MCF 10A (cell line): ENCODE measurements at regions of chr4 and their contacts with region 1.

Region 1: DNA sequence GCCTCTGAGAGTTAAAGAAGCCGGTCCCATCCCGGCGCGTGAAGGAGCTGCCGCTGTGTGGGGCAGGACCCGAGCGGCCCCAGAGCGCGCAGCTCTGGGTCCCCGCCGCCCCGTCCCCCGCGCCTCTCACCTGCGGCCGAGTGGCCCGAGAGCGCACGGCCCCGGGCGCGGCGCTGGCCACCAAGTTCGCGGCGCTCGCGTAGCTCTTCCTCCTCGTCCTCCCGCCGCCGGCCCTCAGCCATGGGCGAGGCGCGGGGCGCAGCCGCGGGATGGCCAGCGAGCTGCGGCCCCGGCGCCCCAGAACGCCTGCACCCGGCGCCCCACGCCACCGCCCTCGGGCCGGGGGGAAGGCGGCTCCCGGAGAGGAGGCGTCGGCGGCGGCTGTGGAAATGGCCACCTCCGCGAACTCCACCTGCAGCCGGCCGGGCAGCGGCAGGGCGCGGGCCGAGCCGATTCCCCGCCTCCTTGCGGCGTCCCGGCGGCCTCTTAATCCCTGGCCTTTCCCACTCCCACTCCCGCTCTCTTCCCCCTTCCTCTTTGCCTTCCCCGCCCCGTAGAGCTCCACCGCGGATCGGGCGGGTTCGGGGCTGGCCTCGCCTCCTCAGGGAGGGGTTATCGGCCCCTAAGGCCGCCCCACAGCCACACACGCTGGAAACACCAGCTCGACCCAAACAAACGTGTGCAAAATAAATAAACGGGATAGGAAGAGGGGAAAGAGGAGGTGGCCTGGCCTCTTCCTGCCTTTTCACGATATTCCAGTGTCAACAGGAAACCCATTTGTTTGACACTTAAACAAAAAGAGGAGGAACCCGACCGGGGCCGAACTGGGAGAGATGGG is at the start of gene SH3D19:
- DNase-seq: peak; percentile 85
- H3K4me3 Mint-ChIP-seq: peak within 1 kb of the TSS; percentile 97
- H3K27ac Mint-ChIP-seq: peak within 1 kb of the TSS; percentile 80
- H3K4me1 Mint-ChIP-seq: peaks cover 49% of the 10 kb centered on the region
- H3K27me3 Mint-ChIP-seq: no peaks in the 10 kb centered on the region
- CTCF ChIP-seq: no peak
- total RNA-seq, gene SH3D19: 42.8 and 51.3 TPM in 2 replicates

Region 2: GRCh38 chr4:151099229-151099975 is 225.9 kb before region 1 on chr4 and contains the start of gene RPS3A:
- CTCF ChIA-PET with region 1: no interaction called
- POLR2A ChIA-PET with region 1: interaction called, 16 read pairs
- intact Hi-C with region 1: no loop called
- DNase-seq: peak; percentile 98
- H3K4me3 Mint-ChIP-seq: peak within 1 kb of the TSS; percentile 91
- H3K27ac Mint-ChIP-seq: peak within 1 kb of the TSS; percentile 100
- H3K4me1 Mint-ChIP-seq: peaks cover 10% of the 10 kb centered on the region
- H3K27me3 Mint-ChIP-seq: no peaks in the 10 kb centered on the region
- CTCF ChIP-seq: peak; percentile 78
- total RNA-seq, gene RPS3A: 2,661 and 2,955 TPM in 2 replicates

Region 3: DNA sequence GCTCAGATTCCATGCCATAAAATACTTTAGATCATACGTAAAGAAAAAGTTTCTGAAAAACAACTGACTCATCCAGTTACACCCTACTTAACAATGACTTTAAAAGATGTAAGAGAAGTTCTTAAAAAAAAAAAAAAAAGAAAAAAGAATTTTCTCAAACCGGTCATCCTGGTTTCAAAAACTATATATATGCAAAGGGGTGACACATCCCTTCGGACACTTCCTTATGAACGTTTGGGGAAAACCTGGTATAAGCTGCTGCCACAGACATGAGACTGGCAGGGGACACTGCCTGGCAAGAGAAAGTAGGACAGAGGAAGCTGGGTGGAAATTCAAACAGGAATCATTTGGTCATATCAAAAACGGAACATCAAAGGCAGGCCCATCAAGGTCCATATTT is 129.5 kb before region 1 on chr4:
- CTCF ChIA-PET with region 1: no interaction called
- POLR2A ChIA-PET with region 1: interaction called, 10 read pairs
- intact Hi-C with region 1: no loop called
- DNase-seq: peak; percentile 44
- H3K4me3 Mint-ChIP-seq: peak overlapping the region; percentile 35
- H3K27ac Mint-ChIP-seq: peak overlapping the region; percentile 97
- H3K4me1 Mint-ChIP-seq: peaks cover 20% of the 10 kb centered on the region
- H3K27me3 Mint-ChIP-seq: no peaks in the 10 kb centered on the region
- CTCF ChIP-seq: no peak

Region 4: DNA sequence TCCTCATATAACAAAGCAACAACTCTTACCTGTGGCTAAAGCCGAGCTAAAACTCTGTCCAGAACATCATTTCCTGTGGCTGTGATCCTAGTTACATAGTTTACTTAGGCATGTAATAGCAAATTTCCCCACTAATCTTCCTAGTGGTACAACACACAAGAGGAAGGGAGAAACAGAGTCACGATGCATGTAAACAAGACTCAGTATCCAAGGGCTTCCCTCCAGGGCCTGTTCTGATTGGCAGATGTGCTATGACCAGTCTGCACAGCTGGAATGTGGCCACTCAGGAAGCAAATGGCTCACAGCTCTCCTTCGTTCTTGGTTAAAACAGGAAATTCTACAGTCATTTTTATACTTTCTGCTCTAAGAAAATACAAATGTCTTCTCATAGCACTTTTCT is 97.6 kb before region 1 on chr4:
- CTCF ChIA-PET with region 1: no interaction called
- POLR2A ChIA-PET with region 1: interaction called, 19 read pairs
- intact Hi-C with region 1: no loop called
- DNase-seq: peak; percentile 69
- H3K4me3 Mint-ChIP-seq: peak overlapping the region; percentile 74
- H3K27ac Mint-ChIP-seq: peak overlapping the region; percentile 97
- H3K4me1 Mint-ChIP-seq: peaks cover 21% of the 10 kb centered on the region
- H3K27me3 Mint-ChIP-seq: no peaks in the 10 kb centered on the region
- CTCF ChIP-seq: no peak

Region 5: GRCh38 chr4:151304755-151305154 is 20.6 kb before region 1 on chr4:
- CTCF ChIA-PET with region 1: interaction called, 3 read pairs
- POLR2A ChIA-PET with region 1: interaction called, 29 read pairs
- intact Hi-C with region 1: no loop called
- DNase-seq: peak; percentile 37
- H3K4me3 Mint-ChIP-seq: no peak overlapping the region
- H3K27ac Mint-ChIP-seq: no peak overlapping the region
- H3K4me1 Mint-ChIP-seq: peaks cover 9% of the 10 kb centered on the region
- H3K27me3 Mint-ChIP-seq: no peaks in the 10 kb centered on the region
- CTCF ChIP-seq: no peak

Region 6: DNA sequence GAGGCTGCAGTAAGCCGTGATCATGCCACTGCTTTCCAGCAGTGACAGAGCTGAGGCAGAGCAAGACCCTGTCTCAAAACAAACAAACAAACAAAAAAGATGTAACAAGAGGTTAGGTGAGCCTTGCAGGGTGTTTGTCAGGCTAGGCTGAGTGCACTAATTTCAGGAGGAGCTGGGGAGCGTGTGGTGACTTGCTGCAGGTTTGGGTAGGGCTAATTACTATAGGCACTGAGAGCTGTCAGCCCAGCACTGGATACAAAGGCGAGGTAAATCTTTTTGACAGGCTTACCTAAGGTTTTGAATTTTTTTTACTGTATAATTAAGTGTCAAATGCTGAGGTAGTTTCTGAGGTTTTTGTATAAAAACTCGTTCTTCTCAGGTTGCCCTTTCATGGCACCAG is 29.8 kb after region 1 on chr4:
- CTCF ChIA-PET with region 1: no interaction called
- POLR2A ChIA-PET with region 1: interaction called, 10 read pairs
- intact Hi-C with region 1: no loop called
- DNase-seq: peak; percentile 28
- H3K4me3 Mint-ChIP-seq: no peak overlapping the region
- H3K27ac Mint-ChIP-seq: no peak overlapping the region
- H3K4me1 Mint-ChIP-seq: peaks cover 6% of the 10 kb centered on the region
- H3K27me3 Mint-ChIP-seq: no peaks in the 10 kb centered on the region
- CTCF ChIP-seq: no peak

Region 7: GRCh38 chr4:151408630-151409469 is 83.5 kb after region 1 on chr4 and contains the start of gene FHIP1A:
- CTCF ChIA-PET with region 1: interaction called, 4 read pairs
- POLR2A ChIA-PET with region 1: interaction called, 14 read pairs
- intact Hi-C with region 1: no loop called
- DNase-seq: peak; percentile 95
- H3K4me3 Mint-ChIP-seq: peak within 1 kb of the TSS; percentile 90
- H3K27ac Mint-ChIP-seq: peak within 1 kb of the TSS; percentile 94
- H3K4me1 Mint-ChIP-seq: peaks cover 22% of the 10 kb centered on the region
- H3K27me3 Mint-ChIP-seq: no peaks in the 10 kb centered on the region
- CTCF ChIP-seq: no peak
- total RNA-seq, gene FHIP1A: 14.8 and 19.8 TPM in 2 replicates

Region 8: DNA sequence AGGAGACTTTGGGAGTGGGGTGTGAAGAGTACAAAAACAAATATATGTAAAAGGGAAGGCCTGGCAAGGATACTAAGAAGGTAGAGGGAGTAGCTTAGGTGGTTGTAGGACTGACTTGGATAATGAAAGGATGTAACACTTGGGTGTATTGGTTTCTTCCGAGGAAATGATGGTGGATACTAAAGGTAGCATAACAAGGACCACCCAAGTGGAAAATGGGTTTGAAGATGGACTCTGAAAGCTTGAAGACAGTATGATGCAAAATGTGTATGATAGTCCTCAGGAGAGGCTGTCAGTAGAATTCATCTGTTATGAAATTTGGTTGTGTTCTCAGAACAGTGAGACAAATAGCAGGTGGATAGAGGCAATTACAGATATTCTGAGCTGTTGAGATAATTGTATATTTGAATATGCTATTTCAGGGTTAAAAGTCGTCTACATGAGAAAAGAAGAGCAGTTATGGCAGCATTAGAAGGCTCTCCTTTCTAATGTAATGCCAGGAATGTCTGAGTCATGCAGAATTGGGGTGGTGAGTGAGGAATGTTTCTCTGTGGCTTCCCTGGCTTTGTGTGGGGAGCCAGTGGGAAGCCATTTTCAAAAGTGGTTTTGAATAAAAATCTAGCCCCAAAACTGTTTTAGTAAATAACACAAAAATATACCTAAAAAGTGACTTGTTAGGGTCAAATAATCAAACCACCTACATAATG is 159.2 kb after region 1 on chr4:
- CTCF ChIA-PET with region 1: no interaction called
- POLR2A ChIA-PET with region 1: no interaction called
- intact Hi-C with region 1: no loop called
- DNase-seq: peak; percentile 84
- H3K4me3 Mint-ChIP-seq: no peak overlapping the region
- H3K27ac Mint-ChIP-seq: peak overlapping the region; percentile 34
- H3K4me1 Mint-ChIP-seq: peaks cover 20% of the 10 kb centered on the region
- H3K27me3 Mint-ChIP-seq: no peaks in the 10 kb centered on the region
- CTCF ChIP-seq: no peak